ENCODE measurements at regions of chr5 and their contacts with region 1.

Region 1: DNA sequence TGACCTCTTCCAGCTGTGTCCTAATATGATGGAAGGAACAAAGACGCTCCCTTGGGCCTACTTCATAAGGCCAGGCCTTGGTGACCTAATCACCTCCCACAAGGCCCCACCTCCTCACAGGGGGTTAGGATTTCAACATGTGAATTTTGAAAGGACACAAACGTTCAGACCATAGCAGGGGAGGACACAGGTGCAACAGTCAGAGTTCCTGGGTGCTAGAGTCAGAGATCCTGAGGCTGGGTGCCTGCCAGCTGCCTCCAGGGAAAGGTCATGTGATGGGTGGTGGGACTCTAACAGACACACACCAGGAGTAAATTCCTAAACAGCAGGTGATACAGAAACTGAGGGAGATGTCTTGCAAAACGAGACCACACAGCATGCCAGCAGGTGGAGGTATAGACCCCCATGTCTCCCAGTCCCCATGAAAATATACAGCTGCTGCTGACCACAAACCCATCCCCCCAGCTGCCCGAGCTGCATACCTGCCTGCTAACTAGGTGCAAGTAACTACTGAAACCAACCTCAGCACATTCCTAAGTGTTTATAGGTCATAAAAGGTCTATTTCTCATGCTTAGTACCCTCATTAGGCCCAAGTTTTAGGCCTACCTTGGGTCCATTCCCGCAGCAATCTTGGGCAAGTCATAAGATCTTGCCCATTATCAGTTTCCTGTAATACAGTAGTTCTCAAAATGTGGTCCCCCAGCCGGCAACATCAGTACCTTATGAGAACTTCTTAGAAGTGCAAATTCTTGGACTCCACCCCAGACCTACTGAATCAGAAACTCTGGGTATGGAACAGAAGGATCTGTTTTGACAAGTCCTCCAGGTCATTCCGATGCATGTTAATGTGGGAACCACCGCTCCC is 245.4 kb downstream of the ENC1 start:
- DNase-seq: peak; percentile 94
- H3K4me3 ChIP-seq: no peak overlapping the region
- H3K27ac ChIP-seq: peak overlapping the region; percentile 90
- H3K4me1 ChIP-seq: peaks cover 29% of the 10 kb centered on the region
- H3K27me3 ChIP-seq: no peaks in the 10 kb centered on the region
- CTCF ChIP-seq: peak; percentile 9 to 36

Region 2: DNA sequence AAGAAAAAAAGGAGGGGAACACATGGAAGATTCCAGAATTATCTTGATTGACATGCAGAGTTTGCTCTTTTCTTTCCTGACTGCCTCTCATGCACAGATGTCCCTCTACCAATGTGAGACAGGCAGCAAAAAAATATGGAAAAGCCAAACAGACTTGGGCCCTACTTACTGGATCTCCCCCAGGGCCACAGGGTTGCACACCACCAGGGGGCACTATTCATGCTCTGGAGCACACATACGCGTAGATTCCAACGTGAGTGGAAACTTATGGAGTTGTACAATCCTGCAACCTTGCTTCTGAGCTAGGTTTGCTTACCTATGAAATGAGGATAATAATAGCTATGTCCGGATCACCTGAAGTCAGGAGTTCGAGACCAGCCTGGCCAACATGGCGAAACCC is 449.7 kb before region 1 on chr5:
- CTCF ChIA-PET with region 1: no interaction called
- dilution Hi-C with region 1: no loop called
- in situ Hi-C with region 1: no loop called
- intact Hi-C with region 1: no loop called
- DNase-seq: no peak
- H3K4me3 ChIP-seq: no peak overlapping the region
- H3K27ac ChIP-seq: no peak overlapping the region
- H3K4me1 ChIP-seq: peaks cover 10% of the 10 kb centered on the region
- H3K27me3 ChIP-seq: no peaks in the 10 kb centered on the region
- CTCF ChIP-seq: peak; percentile 32 to 37

Region 3: DNA sequence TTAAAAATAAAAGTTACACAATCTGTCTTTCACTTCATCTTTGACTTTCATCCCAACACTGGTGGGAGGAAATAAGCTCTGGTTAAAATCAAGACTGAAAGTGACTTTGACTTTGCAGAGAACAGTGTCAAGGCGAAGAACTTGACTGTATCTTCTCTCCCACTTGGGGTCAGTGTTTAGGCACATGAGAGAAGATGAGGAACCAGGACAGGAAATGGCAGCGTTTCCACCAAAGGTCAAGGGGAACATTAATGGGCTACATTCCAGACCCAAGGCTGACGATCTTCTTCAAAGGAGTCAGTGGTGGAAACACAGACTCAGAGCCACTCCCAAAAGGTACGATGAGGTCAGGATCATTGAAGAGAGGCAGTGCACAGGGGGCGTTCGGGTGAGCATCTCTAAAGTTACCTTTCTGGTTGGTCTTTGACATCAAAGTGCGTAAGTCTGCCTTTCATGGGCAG is 359.6 kb before region 1 on chr5:
- CTCF ChIA-PET with region 1: no interaction called
- dilution Hi-C with region 1: no loop called
- in situ Hi-C with region 1: no loop called
- intact Hi-C with region 1: loop called (anchors 1 kb)
- DNase-seq: peak; percentile 84
- H3K4me3 ChIP-seq: peak overlapping the region in 1 of 3 experiments; percentile 9
- H3K27ac ChIP-seq: peak overlapping the region; percentile 90
- H3K4me1 ChIP-seq: peaks cover 55% of the 10 kb centered on the region
- H3K27me3 ChIP-seq: no peaks in the 10 kb centered on the region
- CTCF ChIP-seq: peak; percentile 58 to 61

Region 4: DNA sequence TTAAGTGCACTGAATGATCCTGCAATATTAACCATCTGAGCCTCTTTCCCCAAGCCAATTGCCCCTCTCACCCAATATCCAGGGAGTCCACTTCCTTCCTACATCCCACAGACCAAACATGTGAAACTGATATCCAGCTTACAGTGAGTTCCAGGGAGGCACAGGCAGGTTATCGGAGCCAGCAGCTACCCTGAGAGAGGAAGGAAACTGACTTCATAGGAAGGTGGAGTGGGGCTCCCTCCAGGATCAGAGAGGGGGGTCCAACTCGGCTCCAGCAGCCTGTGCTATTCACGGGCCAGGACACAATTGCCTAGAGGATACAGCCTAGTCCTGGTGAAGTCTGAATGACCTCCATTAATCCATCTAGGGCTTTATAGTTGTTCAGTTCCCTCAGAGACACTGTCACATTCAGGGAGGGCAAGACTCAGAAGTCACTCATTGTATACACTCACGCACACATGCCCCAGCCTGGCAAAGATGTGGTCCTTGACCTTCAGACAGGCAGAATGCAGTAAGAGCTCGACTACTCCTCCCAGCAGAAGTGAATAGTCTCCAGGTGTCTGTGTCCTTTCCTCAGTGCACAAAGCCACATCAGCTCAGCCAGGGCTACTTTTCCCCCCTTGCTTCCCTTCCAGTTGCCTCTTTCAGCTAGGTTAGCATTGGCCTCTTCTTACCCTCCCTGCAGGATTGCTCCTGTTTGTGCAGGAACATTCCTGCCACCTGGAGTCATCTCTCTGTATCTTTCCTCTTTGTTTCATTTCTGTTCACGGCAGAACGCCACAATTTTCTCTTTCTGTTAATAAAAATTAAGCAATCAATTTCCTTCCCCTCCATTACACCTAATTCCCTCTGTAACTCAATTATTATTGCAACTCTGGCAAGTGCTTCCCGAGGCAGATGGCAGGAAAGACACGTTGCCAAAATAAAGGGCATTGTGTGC is 267.5 kb before region 1 on chr5:
- CTCF ChIA-PET with region 1: no interaction called
- dilution Hi-C with region 1: no loop called
- in situ Hi-C with region 1: no loop called
- intact Hi-C with region 1: loop called (anchors 5 kb)
- DNase-seq: peak; percentile 48
- H3K4me3 ChIP-seq: peak overlapping the region in 2 of 3 experiments; percentile 15 to 27
- H3K27ac ChIP-seq: no peak overlapping the region
- H3K4me1 ChIP-seq: peaks cover 15% of the 10 kb centered on the region
- H3K27me3 ChIP-seq: no peaks in the 10 kb centered on the region
- CTCF ChIP-seq: peak; percentile 46 to 62

Region 5: GRCh38 chr5:74240786-74241750 is 154.1 kb before region 1 on chr5:
- CTCF ChIA-PET with region 1: no interaction called
- dilution Hi-C with region 1: no loop called
- in situ Hi-C with region 1: no loop called
- intact Hi-C with region 1: loop called (anchors 2 kb)
- DNase-seq: peak; percentile 100
- H3K4me3 ChIP-seq: peak overlapping the region in 2 of 3 experiments; percentile 3 to 11
- H3K27ac ChIP-seq: peak overlapping the region; percentile 96
- H3K4me1 ChIP-seq: peaks cover 39% of the 10 kb centered on the region
- H3K27me3 ChIP-seq: no peaks in the 10 kb centered on the region
- CTCF ChIP-seq: no peak

Measured in mammary epithelial cell (primary cell).